ENCODE measurements at regions of chr20 and their contacts with region 1.

Region 1: GRCh38 chr20:13302647-13303450 is 81.8 kb downstream of the ISM1 start:
- DNase-seq: peak; percentile 4
- ATAC-seq: peak; percentile 99
- H3K4me3 ChIP-seq: no peak overlapping the region
- H3K27ac ChIP-seq: no peak overlapping the region
- H3K4me1 ChIP-seq: no peaks in the 10 kb centered on the region
- H3K27me3 ChIP-seq: no peaks in the 10 kb centered on the region
- CTCF ChIP-seq: peak; percentile 21 to 84 (median 80); a peak in 5 of 6 replicates
- POLR2A ChIP-seq: no peak
- RAD21 ChIP-seq: peak; percentile 49

Region 2: GRCh38 chr20:13292201-13292885 is 10.5 kb before region 1 on chr20:
- CTCF ChIA-PET with region 1: interaction called, 13 read pairs
- POLR2A ChIA-PET with region 1: no interaction called
- RAD21 ChIA-PET with region 1: no interaction called
- intact Hi-C with region 1: no loop called
- DNase-seq: no peak
- ATAC-seq: no peak
- H3K4me3 ChIP-seq: no peak overlapping the region
- H3K27ac ChIP-seq: no peak overlapping the region
- H3K4me1 ChIP-seq: no peaks in the 10 kb centered on the region
- H3K27me3 ChIP-seq: no peaks in the 10 kb centered on the region
- CTCF ChIP-seq: no peak
- POLR2A ChIP-seq: no peak
- RAD21 ChIP-seq: no peak

Measured in HCT116 (cell line).